MCF 10A (cell line): ENCODE measurements at regions of chr3 and their contacts with region 1.

Region 1: GRCh38 chr3:149120051-149120972 is 9.1 kb upstream of the HPS3 start:
- DNase-seq: peak; percentile 74
- H3K4me3 Mint-ChIP-seq: no peak overlapping the region
- H3K27ac Mint-ChIP-seq: no peak overlapping the region
- H3K4me1 Mint-ChIP-seq: peaks cover 5% of the 10 kb centered on the region
- H3K27me3 Mint-ChIP-seq: no peaks in the 10 kb centered on the region
- CTCF ChIP-seq: peak; percentile 57

Region 2: DNA sequence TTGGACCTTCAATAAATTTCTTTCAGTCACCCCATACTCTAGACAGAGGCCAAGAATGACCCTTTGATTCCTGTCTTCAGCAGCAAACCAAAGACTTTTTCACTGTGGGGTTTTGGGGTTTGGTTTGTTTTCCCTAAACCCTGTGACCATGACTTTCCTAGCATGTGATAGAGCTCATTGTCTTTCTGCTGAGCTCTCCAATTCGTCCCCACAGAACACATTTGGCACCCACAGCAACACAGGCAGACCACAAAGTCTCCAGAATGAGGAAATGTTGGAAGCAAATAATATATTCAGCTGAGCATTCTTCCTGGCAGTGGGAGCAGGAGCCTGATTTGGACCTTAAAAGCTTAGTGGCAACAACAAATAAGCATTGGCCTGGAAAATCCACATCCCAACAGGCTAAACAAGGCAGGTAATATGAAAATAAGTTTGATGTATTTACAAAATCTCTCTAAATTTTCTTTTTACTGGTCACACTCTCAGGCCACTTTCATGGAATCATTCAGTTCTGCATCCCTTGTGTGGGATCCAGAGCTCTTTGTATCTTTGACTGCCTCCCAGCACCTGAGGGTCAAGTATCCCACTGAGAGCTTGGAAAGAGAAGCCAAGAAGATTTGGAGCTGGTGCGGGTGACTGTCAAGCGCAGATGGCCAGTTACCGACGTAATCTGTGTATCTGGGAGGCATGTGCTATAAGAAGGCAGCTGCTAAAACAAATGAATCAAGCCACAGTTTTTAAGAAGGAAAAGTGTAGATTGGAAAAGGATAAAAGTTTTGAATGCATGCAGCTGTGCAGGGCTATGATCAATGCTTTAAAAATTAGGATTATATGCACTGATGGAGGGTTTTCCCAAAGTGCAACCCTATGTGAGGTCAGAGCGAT is 329.2 kb before region 1 on chr3:
- CTCF ChIA-PET with region 1: no interaction called
- POLR2A ChIA-PET with region 1: no interaction called
- intact Hi-C with region 1: no loop called
- DNase-seq: no peak
- H3K4me3 Mint-ChIP-seq: no peak overlapping the region
- H3K27ac Mint-ChIP-seq: no peak overlapping the region
- H3K4me1 Mint-ChIP-seq: no peaks in the 10 kb centered on the region
- H3K27me3 Mint-ChIP-seq: peaks cover 65% of the 10 kb centered on the region
- CTCF ChIP-seq: no peak

Region 3: GRCh38 chr3:148955544-148956346 is 164.6 kb before region 1 on chr3:
- CTCF ChIA-PET with region 1: interaction called, 42 read pairs
- POLR2A ChIA-PET with region 1: no interaction called
- intact Hi-C with region 1: loop called (anchors 1 kb)
- DNase-seq: peak; percentile 66
- H3K4me3 Mint-ChIP-seq: no peak overlapping the region
- H3K27ac Mint-ChIP-seq: no peak overlapping the region
- H3K4me1 Mint-ChIP-seq: no peaks in the 10 kb centered on the region
- H3K27me3 Mint-ChIP-seq: peaks cover 13% of the 10 kb centered on the region
- CTCF ChIP-seq: peak; percentile 54

Region 4: GRCh38 chr3:149152420-149152819 is 32.1 kb after region 1 on chr3:
- CTCF ChIA-PET with region 1: interaction called, 10 read pairs
- POLR2A ChIA-PET with region 1: no interaction called
- intact Hi-C with region 1: no loop called
- DNase-seq: peak; percentile 42
- H3K4me3 Mint-ChIP-seq: no peak overlapping the region
- H3K27ac Mint-ChIP-seq: no peak overlapping the region
- H3K4me1 Mint-ChIP-seq: no peaks in the 10 kb centered on the region
- H3K27me3 Mint-ChIP-seq: no peaks in the 10 kb centered on the region
- CTCF ChIP-seq: no peak

Region 5: DNA sequence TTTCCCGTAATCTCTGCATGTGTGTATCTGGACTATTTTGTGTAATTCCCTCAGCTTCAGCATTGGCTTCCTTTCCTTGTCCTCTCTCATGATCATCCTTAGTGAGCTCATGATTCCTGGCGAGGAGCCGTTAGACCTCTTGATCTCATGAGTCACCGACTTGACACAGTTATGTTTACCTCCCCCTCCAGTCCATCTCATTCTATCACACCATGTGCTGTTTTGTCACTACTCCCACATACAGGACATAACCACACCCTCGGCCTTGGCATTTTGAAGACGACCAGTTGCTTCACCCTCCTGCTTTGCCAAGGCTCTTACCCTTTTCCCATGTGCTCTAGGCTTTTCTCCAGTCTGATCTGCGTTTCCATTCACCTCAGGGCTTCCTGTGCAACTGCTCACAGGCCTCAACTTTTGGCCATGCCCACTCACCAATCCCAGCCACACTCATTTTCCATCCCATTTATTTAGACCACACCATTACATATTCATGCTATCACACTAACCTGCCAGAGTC is 59.8 kb after region 1 on chr3:
- CTCF ChIA-PET with region 1: interaction called, 14 read pairs
- POLR2A ChIA-PET with region 1: no interaction called
- intact Hi-C with region 1: no loop called
- DNase-seq: peak; percentile 100
- H3K4me3 Mint-ChIP-seq: no peak overlapping the region
- H3K27ac Mint-ChIP-seq: no peak overlapping the region
- H3K4me1 Mint-ChIP-seq: peaks cover 6% of the 10 kb centered on the region
- H3K27me3 Mint-ChIP-seq: no peaks in the 10 kb centered on the region
- CTCF ChIP-seq: no peak

Region 6: GRCh38 chr3:149267565-149267964 is 147.3 kb after region 1 on chr3:
- CTCF ChIA-PET with region 1: interaction called, 181 read pairs
- POLR2A ChIA-PET with region 1: interaction called, 3 read pairs
- intact Hi-C with region 1: no loop called
- DNase-seq: no peak
- H3K4me3 Mint-ChIP-seq: no peak overlapping the region
- H3K27ac Mint-ChIP-seq: no peak overlapping the region
- H3K4me1 Mint-ChIP-seq: peaks cover 5% of the 10 kb centered on the region
- H3K27me3 Mint-ChIP-seq: no peaks in the 10 kb centered on the region
- CTCF ChIP-seq: no peak

Region 7: DNA sequence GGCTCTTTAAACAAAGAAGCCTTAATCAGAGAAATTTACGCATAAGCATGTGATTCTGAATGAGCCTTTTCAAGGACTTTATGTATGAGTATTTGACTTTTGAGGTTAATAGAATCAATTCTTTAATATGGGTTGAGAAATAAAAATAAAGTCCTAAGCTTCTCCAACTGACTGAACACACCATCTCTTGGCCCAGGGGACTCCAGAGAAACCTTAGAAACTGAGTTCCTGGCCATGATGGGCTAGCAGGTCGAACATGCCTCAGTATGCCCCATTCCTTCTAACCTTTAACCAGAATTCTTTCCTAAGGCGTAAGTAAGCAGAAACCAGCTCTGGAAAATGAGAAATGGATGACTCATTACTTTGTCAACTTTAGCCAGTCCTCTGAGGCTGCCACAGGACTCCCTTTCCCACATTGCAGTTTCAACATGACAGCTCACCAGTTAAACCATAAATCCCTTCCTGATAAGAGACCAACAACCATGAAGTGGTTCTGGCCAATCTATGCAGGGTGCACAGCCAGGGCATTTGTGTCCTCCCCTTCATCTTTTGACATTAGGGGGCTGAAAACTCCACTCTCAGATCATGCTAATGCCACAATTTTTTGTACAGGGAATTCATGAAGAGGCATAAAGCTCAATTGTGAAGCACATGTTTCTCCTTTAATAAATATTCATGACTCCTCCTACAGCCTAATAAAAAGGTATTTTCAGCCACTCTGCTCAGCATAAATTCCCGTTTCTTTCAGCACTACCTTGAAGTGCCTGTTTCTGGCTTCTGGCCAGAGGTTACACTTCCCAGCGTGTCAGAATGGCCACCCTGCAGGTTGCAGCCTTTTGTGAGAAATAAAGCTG is 179.9 kb after region 1 on chr3:
- CTCF ChIA-PET with region 1: interaction called, 17 read pairs
- POLR2A ChIA-PET with region 1: no interaction called
- intact Hi-C with region 1: no loop called
- DNase-seq: peak; percentile 97
- H3K4me3 Mint-ChIP-seq: peak overlapping the region; percentile 30
- H3K27ac Mint-ChIP-seq: peak overlapping the region; percentile 90
- H3K4me1 Mint-ChIP-seq: peaks cover 21% of the 10 kb centered on the region
- H3K27me3 Mint-ChIP-seq: no peaks in the 10 kb centered on the region
- CTCF ChIP-seq: no peak

Region 8: DNA sequence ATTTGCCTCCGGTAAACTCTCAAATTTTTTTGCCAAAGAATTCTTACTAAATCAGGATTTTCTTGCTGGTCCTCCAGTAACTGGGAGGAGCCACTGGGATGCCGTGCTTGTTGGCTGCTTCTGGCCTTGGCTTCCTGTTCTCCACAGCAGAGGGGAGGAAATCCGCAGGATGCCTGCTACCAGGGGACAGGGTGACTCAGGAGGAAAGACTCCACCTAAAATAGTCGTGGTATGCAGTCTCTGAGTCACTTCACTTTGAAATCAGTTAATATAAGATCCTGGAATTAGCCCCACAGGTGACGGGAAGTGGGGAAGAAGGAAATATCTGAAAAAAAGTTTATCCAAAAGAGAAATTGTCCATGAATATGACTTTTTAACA is 219.6 kb after region 1 on chr3:
- CTCF ChIA-PET with region 1: interaction called, 18 read pairs
- POLR2A ChIA-PET with region 1: no interaction called
- intact Hi-C with region 1: no loop called
- DNase-seq: peak; percentile 91
- H3K4me3 Mint-ChIP-seq: no peak overlapping the region
- H3K27ac Mint-ChIP-seq: peak overlapping the region; percentile 85
- H3K4me1 Mint-ChIP-seq: peaks cover 10% of the 10 kb centered on the region
- H3K27me3 Mint-ChIP-seq: no peaks in the 10 kb centered on the region
- CTCF ChIP-seq: no peak